Right lobe of liver (tissue), 6 donors: ENCODE measurements at regions of chr9 and their contacts with region 1.

Region 1: GRCh38 chr9:8053530-8053929 is 254.0 kb upstream of the DMAC1 start:
- DNase-seq: no peak
- ATAC-seq: peak in 1 of 4 donors; percentile 27
- H3K4me3 ChIP-seq: no peak overlapping the region
- H3K27ac ChIP-seq: no peak overlapping the region
- H3K4me1 ChIP-seq: no peaks in the 10 kb centered on the region
- H3K27me3 ChIP-seq: no peaks in the 10 kb centered on the region
- CTCF ChIP-seq: no peak
- POLR2A ChIP-seq: no peak

Region 2: DNA sequence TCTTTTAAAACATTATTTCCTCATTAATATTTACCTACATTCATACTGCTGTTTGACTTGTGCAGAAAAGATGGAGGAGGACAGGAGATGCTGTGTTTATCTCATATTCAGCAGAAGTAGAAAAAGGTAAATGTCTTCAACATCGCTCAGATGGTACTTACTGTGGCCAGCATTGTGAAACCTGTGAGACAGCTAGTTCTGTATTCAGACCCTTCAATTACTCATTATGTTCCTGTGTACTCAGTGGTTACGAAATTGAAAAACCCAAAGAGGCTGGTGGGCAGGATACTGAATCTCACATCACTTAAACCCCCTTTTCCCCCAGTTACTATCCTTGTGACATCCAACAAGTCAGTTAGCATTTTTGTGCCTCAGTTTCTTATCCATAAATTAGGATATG is 1079.8 kb before region 1 on chr9:
- intact Hi-C with region 1: no loop called
- DNase-seq: no peak
- ATAC-seq: peak in 1 of 4 donors; percentile 51
- H3K4me3 ChIP-seq: no peak overlapping the region
- H3K27ac ChIP-seq: no peak overlapping the region
- H3K4me1 ChIP-seq: no peaks in the 10 kb centered on the region
- H3K27me3 ChIP-seq: no peaks in the 10 kb centered on the region
- CTCF ChIP-seq: no peak
- POLR2A ChIP-seq: no peak

Region 3: GRCh38 chr9:7996558-7996957 is 57.0 kb before region 1 on chr9:
- intact Hi-C with region 1: loop called in 1 of 2 experiments (anchors 10 kb)
- DNase-seq: no peak
- ATAC-seq: no peak
- H3K4me3 ChIP-seq: no peak overlapping the region
- H3K27ac ChIP-seq: no peak overlapping the region
- H3K4me1 ChIP-seq: no peaks in the 10 kb centered on the region
- H3K27me3 ChIP-seq: no peaks in the 10 kb centered on the region
- CTCF ChIP-seq: no peak
- POLR2A ChIP-seq: no peak

Region 4: GRCh38 chr9:8156346-8156745 is 102.8 kb after region 1 on chr9:
- intact Hi-C with region 1: no loop called
- DNase-seq: no peak
- ATAC-seq: no peak
- H3K4me3 ChIP-seq: no peak overlapping the region
- H3K27ac ChIP-seq: no peak overlapping the region
- H3K4me1 ChIP-seq: no peaks in the 10 kb centered on the region
- H3K27me3 ChIP-seq: no peaks in the 10 kb centered on the region
- CTCF ChIP-seq: no peak
- POLR2A ChIP-seq: no peak